ENCODE measurements at regions of chr20 and their contacts with region 1.

Region 1: DNA sequence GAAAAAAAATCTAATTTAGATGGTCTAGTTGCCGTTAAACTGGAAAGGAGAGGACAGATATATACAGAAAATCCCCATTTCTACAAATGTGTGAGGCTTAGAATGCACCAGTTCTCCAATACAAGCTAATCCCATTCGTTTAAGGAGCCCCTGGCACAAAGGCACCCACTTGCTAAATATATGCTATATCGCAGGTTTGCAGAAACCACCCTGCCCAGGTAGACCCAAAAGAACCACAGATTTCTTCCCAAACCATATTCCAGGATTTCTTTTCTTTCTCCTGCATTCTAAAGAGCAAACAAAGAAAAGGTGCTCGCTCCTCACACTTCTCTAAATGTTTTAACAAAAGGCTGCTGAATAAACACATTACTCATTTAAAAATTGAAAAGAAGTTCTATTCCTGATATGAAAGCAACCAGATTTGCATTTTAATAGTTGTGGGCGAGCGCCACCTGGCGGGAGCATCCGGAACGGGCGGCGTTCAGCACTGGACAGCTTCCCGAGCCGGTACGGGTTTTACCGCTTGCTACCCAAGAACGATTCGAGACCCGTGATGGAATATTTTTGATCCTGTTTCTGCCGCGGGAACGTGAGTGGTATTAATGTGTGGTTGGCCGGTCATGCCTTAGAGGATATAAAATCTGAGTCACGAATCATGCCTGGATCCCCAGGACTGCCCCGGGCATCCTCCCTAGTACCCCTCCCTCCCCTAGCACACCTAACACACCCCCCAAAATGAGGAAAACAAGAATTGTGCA is 2.1 kb downstream of the PTPRT start:
- DNase-seq: peak; percentile 44 to 94 (median 88)

Region 2: GRCh38 chr20:42191143-42191917 is 996.3 kb before region 1 on chr20:
- intact Hi-C with region 1: loop called (anchors 10 kb)
- DNase-seq: peak in 6 of 42 donors; percentile 7 to 48 (median 17)

Region 3: DNA sequence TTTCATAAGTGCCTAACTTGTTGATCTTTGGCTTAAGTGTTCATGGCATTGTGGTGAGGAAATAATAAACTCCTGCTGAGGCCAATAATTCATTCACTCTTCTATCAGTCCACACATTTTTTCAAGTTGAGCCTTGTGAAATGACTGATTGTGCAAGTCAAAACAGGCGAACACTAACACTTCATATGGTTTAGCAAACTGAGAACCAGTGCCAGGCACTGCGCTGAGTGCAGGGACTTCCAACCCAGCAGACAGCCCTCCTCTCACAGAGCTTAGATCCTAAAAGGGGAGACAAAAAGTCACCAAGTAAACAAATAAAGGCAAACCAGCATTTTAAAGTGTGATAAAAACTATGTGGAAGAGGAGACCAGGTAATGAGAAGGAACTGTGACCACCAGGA is 432.9 kb before region 1 on chr20:
- intact Hi-C with region 1: no loop called
- DNase-seq: no peak

Region 4: DNA sequence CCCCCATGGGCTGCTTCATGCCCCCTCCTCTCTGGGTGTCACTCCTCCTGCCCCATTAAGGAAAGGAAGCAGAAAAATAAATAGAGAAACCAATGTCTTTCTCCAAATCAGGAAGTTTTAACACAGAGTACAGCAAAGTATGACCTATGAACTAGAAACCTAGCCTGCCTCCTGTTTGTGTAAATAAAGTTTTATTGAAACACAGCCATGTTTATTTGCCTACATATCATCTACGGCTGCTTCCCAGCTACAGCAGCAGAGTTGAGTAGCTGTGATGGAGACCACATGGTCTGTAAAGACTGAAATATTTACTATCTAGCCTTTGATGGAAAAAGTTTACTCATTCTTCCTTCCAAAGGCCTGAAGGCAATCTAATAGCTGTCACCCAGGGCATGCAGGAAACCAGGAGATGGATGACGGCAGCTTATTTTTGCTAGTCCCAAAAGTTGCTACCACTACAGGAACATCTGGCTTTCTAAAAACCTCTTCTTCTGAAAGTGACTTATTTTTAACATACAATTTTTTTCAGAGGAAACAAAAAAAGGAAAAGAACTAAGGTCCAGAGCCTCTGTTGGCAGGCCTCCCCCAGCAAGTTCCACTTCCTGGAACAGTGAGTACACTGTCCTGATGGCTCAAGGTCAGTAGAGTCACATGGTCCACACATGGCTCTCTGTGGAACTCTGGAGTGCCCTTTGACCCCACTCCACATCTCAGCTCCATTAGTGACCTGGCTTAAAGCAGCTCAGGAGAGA is 285.8 kb before region 1 on chr20:
- intact Hi-C with region 1: no loop called
- DNase-seq: no peak

Region 5: GRCh38 chr20:43138061-43138860 is 49.4 kb before region 1 on chr20:
- intact Hi-C with region 1: no loop called
- DNase-seq: peak in 36 of 42 donors; percentile 11 to 64 (median 40)

Region 6: DNA sequence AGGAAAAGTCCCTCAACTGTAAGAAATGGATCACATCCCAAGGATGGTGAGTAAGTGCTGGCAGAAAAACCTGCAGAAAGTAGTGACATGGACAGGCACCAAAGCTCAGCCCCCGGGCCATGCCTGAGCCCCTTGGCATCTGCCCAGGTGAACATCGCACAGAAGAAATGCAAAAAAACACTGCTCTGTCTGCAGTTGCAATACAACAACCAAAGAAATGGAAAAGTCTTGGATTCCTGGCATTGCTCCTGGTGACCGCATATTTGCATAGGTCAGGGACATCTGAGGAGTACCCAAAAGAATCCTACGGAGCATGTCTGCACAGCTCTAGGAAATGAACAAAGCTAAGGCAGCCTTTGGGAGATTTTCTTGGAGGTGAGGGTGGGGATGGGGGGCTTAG is 65.1 kb after region 1 on chr20:
- intact Hi-C with region 1: no loop called
- DNase-seq: no peak